ENCODE measurements at regions of chr22 and their contacts with region 1.

Region 1: DNA sequence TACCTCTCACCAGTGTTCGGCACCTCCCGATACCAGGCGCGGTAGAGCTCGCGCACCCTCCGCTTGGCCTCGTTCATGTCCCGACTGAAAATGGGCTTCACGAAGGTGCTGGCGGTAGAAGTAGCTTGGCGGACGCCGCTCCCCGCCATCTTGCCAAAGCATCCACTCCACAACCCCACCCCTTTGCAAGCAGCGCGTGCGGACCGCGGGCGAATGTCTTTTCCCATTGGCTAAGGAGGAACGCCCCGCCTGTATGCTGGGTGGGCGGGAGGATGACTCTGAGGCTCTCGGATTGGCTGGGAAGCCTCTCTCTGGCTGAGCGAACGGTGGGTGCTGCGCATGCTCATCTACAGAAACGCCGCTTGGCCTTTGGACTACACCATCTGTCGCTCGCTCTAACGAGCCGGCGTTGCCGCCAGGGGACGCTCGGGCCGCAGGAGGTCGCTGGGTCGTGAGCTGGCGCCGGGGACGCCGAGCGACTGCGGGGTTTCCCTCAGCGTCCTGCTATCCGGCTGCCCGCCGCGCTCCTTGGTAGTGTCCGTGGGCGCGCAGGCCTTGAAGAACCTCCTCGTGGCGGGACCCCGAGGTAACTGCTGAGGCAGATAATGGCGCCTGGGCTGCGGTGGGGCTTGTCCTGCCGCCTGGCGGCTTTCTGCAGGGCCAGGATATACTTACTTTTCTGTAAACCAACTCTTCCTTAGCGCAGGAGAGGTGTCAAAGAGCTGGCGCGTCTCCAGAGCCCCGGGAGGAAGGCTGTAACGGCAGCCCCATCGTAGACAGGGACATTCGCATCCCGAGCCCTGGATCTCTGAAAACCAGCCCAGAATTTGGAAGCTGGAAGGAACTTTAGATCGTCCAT is at the start of gene NDUFA6:
- DNase-seq: peak; percentile 98 to 99
- H3K4me3 ChIP-seq: peak within 1 kb of the TSS; percentile 79 to 91
- H3K27ac ChIP-seq: peak within 1 kb of the TSS; percentile 93 to 97
- H3K4me1 ChIP-seq: peaks cover 5 to 16% of the 10 kb centered on the region in 2 donors
- H3K27me3 ChIP-seq: no peaks in the 10 kb centered on the region
- CTCF ChIP-seq: peak; percentile 90 to 98 (median 95)
- total RNA-seq, gene NDUFA6: 23.9 TPM

Region 2: GRCh38 chr22:42070517-42071422 is 20.1 kb before region 1 on chr22 and contains the start of gene NAGA:
- intact Hi-C with region 1: loop called (anchors 1 kb)
- DNase-seq: peak; percentile 91 to 98
- H3K4me3 ChIP-seq: peak within 1 kb of the TSS; percentile 46 to 73
- H3K27ac ChIP-seq: peak within 1 kb of the TSS; percentile 81 to 84
- H3K4me1 ChIP-seq: peaks cover 0 to 28% of the 10 kb centered on the region in 2 donors
- H3K27me3 ChIP-seq: no peaks in the 10 kb centered on the region
- CTCF ChIP-seq: no peak
- total RNA-seq, gene NAGA: 52.3 TPM

Region 3: GRCh38 chr22:42160830-42161696 is 70.2 kb after region 1 on chr22:
- intact Hi-C with region 1: no loop called
- DNase-seq: no peak
- H3K4me3 ChIP-seq: no peak overlapping the region
- H3K27ac ChIP-seq: no peak overlapping the region
- H3K4me1 ChIP-seq: no peaks in the 10 kb centered on the region
- H3K27me3 ChIP-seq: no peaks in the 10 kb centered on the region
- CTCF ChIP-seq: no peak

Region 4: DNA sequence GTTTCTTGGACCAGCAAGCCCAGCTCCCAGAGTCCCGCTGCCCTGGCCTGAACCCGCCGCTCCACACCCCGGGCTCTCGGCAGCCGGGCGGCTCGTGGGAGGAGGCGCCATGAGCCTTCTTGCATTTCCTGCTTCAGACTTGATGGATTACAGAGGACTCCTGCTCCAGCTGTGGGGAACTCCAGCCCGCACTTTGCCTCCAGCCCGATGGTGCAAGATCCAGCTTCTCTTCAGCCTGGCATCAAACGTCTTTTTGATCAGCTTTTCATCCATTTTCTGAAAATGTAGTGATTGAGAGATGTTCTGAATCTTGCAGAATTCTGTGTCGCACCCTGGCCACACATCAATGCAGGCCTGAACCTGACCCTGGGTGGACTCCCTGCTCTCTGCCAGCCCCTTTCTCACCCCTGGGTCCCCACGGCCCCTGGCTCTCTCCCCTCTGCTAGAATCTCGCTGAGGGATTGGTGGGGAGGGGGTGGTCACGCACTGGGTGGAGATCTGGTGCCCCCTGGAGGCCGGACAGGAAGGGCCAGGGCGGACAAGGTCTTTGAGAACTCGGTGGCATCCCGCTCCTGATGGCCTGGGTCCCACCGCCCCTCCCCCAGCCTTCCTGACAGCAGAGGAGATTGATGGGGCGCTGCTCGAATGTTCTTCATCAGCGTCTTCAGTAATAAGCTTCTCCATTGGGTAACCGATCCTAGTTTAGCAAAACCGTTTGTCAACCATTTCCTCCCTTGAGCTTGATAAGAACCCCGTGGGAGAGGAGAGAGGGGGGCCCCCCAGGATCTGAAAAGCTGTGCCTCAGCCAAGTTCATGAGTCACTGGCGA is 353.5 kb after region 1 on chr22:
- intact Hi-C with region 1: loop called (anchors 2 kb)
- DNase-seq: peak; percentile 62 to 93
- H3K4me3 ChIP-seq: peak overlapping the region; percentile 38 to 64
- H3K27ac ChIP-seq: peak overlapping the region; percentile 81 to 82
- H3K4me1 ChIP-seq: peaks cover 0 to 17% of the 10 kb centered on the region in 2 donors
- H3K27me3 ChIP-seq: no peaks in the 10 kb centered on the region
- CTCF ChIP-seq: peak; percentile 48 to 61 (median 57)